Heart left ventricle (tissue), 16 donors: ENCODE measurements at regions of chr12 and their contacts with region 1.

Region 1: GRCh38 chr12:124567661-124568373 is 405 bp upstream of the NCOR2 start:
- DNase-seq: peak; percentile 96 to 98 (median 96)
- ATAC-seq: peak; percentile 79 to 90 (median 86)
- H3K4me3 ChIP-seq: peak overlapping the region in 11 of 12 donors; percentile 24 to 99 (median 47)
- H3K27ac ChIP-seq: peak overlapping the region; percentile 66 to 99 (median 92)
- H3K4me1 ChIP-seq: peaks cover 0 to 53% (median 43%) of the 10 kb centered on the region in 12 donors
- H3K27me3 ChIP-seq: no peaks in the 10 kb centered on the region
- CTCF ChIP-seq: peak in 1 of 12 donors; percentile 16
- POLR2A ChIP-seq: no peak

Region 2: GRCh38 chr12:124036674-124037109 is 531.1 kb before region 1 on chr12:
- intact Hi-C with region 1: loop called in 2 of 10 experiments (anchors 10 kb)
- DNase-seq: peak in 1 of 5 donors; percentile 49
- ATAC-seq: peak in 3 of 4 donors; percentile 35 to 55 (median 51)
- H3K4me3 ChIP-seq: no peak overlapping the region
- H3K27ac ChIP-seq: no peak overlapping the region
- H3K4me1 ChIP-seq: peaks cover 0 to 9% (median 0%) of the 10 kb centered on the region in 12 donors
- H3K27me3 ChIP-seq: no peaks in the 10 kb centered on the region
- CTCF ChIP-seq: peak; percentile 84 to 99 (median 94)
- POLR2A ChIP-seq: no peak

Region 3: DNA sequence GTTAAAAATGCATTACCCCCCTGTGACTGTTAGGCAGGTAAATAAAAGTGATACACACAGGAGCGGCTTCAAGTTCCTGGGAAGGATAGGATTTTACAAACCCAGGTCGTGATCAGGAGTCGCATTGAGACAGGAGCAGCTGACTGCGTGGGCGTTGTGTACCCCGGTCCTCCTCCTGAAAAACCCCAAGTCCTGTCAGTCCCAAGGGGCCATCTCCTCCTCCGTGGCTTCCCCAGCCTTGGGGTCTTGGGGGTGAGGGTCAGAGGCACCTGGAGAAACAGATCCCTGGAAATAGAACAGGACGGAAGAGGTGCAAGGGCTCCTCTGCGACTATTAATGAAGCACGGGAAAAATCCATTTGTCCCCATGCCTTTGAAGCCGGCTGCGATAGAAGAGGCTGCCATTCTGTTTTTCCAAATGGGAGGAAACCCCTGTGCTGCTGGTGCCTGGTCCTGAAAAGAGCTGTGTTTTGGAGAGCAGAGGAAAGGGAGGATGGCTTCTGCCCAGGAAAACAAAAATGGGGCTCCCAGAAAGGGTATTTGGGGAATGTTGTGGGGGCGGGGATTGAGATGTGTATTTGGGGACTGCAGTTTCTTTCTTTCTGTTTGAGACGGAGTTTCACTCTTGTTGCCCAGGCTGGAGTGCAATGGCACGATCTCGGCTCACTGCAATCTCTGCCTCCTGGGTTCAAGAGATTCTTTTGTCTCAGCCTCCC is 451.7 kb before region 1 on chr12:
- intact Hi-C with region 1: no loop called
- DNase-seq: no peak
- ATAC-seq: no peak
- H3K4me3 ChIP-seq: no peak overlapping the region
- H3K27ac ChIP-seq: no peak overlapping the region
- H3K4me1 ChIP-seq: no peaks in the 10 kb centered on the region
- H3K27me3 ChIP-seq: no peaks in the 10 kb centered on the region
- CTCF ChIP-seq: no peak
- POLR2A ChIP-seq: no peak

Region 4: DNA sequence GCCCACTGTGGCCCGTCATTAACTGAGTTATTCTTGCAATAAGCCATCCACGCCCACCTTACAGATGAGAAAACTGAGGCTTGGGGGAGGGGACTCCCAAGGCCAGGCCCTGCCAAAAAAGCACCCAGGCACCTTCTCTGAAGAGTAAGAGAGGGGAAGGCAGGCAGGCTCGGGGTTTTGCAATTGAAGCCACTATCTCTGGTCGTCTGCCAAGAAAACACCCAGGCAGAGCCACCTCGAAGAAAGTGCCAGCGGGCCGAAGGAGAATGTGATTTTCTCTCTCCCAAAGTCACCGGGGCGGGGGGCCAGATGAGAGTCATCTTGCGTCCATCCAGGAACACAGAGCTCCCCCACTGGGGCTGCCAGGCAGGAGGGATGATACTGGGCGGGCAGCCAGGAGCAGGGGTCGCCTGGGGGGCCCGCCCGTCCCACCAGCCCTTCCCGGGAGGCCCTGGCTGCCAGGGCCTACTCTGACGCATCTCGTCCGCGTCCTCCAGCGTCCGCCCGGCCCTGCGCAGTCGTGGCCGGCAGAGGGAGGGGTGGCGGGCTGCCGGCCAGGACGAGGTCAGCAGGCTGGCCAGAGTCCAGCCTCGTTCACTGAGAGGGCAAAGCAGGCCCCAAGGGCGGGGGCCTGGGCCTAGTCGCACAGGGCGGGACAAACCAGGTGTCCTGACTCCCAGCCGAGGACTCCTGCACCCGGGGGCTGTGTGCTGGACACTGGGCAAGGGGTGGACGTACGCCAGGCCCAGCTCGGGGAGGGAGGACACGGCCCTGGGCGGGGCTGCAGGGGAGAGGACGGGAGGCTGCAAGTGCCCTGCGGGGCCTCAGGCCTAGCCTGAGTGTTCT is 198.5 kb before region 1 on chr12:
- intact Hi-C with region 1: loop called in 2 of 10 experiments (anchors 5 kb)
- DNase-seq: peak; percentile 93 to 96 (median 94)
- ATAC-seq: peak; percentile 82 to 90 (median 88)
- H3K4me3 ChIP-seq: peak overlapping the region in 2 of 12 donors; percentile 12 to 16
- H3K27ac ChIP-seq: peak overlapping the region; percentile 74 to 99 (median 94)
- H3K4me1 ChIP-seq: peaks cover 8 to 76% (median 56%) of the 10 kb centered on the region in 12 donors
- H3K27me3 ChIP-seq: no peaks in the 10 kb centered on the region
- CTCF ChIP-seq: peak; percentile 23 to 69 (median 52)
- POLR2A ChIP-seq: peak in 1 of 2 donors; percentile 14

Region 5: DNA sequence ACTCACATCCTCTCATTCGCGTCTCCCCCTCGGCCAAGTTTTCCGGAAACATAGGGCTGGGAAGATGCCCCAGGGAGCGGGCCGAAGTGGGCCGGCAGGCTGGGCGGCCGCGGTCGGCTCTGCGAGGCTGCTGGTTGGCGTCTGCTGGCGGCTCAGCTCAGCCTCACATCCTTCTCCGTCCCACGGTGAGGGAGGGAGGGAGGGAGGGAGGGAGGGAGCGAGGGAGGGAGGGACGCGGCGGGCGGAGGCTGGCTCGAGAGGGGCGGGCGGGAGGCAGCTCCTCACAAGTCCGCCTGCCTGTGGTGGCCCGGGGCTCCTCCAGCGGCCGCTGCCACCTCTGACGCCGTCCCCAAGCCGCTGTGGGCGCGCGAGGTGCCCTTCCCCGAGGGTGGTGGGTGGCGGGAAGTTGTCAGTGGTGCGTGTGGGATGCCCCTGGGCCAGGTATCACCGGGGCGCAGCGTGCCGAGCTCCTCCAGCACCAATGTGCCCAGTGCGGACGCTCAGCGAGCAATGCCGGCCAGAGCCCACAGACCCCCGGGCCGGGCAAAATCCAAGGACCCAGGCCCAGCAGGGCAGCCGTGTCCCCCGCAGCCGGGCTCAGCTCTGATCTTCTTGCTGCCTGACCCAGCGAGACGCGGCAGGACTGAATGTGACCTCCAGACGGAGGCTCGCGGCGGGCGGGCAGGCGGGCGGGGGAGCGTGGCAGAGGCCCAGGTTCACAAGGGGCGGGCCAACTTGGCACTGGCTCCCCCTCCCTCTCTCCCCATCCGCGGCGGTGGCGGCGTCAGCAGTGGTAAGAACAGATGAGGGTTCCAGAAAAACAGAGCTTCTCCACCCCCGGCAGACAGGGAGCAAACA is 178.9 kb before region 1 on chr12:
- intact Hi-C with region 1: loop called in 3 of 10 experiments (anchors 5 to 10 kb)
- DNase-seq: peak; percentile 89 to 93 (median 93)
- ATAC-seq: peak; percentile 21 to 67 (median 59)
- H3K4me3 ChIP-seq: peak overlapping the region; percentile 33 to 81 (median 64)
- H3K27ac ChIP-seq: peak overlapping the region; percentile 73 to 99 (median 96)
- H3K4me1 ChIP-seq: peaks cover 23 to 98% (median 90%) of the 10 kb centered on the region in 12 donors
- H3K27me3 ChIP-seq: no peaks in the 10 kb centered on the region
- CTCF ChIP-seq: peak in 3 of 12 donors; percentile 9 to 34 (median 22)
- POLR2A ChIP-seq: peak in 1 of 2 donors; percentile 52

Region 6: GRCh38 chr12:124422129-124422569 is 145.7 kb before region 1 on chr12:
- intact Hi-C with region 1: no loop called
- DNase-seq: no peak
- ATAC-seq: peak in 3 of 4 donors; percentile 2 to 11 (median 4)
- H3K4me3 ChIP-seq: peak overlapping the region in 7 of 12 donors; percentile 3 to 27 (median 12)
- H3K27ac ChIP-seq: peak overlapping the region; percentile 82 to 94 (median 90)
- H3K4me1 ChIP-seq: peaks cover 6 to 73% (median 45%) of the 10 kb centered on the region in 12 donors
- H3K27me3 ChIP-seq: no peaks in the 10 kb centered on the region
- CTCF ChIP-seq: no peak
- POLR2A ChIP-seq: no peak

Region 7: GRCh38 chr12:124490584-124491308 is 77.1 kb before region 1 on chr12:
- intact Hi-C with region 1: no loop called
- DNase-seq: peak; percentile 87 to 96 (median 90)
- ATAC-seq: peak; percentile 87 to 93 (median 92)
- H3K4me3 ChIP-seq: no peak overlapping the region
- H3K27ac ChIP-seq: peak overlapping the region in 9 of 12 donors; percentile 0 to 70 (median 44)
- H3K4me1 ChIP-seq: peaks cover 10 to 85% (median 64%) of the 10 kb centered on the region in 12 donors
- H3K27me3 ChIP-seq: no peaks in the 10 kb centered on the region
- CTCF ChIP-seq: no peak
- POLR2A ChIP-seq: no peak

Region 8: DNA sequence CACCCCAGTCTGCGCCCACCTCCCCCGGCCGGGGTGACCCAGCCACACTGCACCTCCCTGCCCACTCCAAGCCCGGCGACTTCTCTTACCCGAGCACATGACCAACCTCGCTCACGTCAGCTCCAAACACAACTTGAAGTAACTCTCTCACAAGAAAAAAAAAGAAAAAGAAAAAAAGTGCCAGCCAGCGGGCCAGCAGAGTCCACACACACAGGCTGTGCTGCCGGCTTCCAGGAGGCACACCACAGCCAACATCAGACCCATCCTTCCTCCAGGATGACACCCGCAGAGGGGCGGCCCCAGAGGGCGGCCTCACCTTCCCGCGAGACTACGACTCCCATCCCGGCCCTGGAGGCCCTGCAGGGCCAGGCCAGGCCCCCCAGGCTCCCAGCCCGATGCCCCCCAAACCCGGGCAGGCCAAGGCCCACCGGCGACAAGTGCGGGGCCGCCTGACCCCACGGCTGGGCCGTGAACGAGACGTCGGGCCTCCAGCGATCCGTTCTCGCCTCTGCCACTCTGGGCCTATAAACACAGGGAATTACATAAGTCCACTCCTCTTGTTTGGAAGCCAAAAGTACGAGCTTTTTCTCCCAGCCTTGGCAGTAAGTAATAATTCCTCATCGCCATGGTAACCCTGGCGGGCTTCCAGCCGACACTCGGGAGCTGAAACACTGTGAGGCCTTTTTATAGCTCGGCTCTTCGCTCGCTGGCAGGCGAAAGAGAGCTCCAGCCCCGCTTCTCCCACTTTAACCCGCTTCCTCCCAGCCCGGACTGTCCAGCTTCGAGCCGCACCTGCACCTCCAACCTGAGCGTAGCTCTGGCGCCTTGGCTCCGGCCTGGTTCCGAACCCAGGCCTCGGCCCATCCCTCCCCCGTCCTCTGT is 49.5 kb before region 1 on chr12:
- intact Hi-C with region 1: loop called in 8 of 10 experiments (anchors 1 to 5 kb)
- DNase-seq: peak; percentile 97 to 99 (median 98)
- ATAC-seq: peak; percentile 69 to 79 (median 72)
- H3K4me3 ChIP-seq: peak overlapping the region; percentile 35 to 81 (median 58)
- H3K27ac ChIP-seq: peak overlapping the region; percentile 90 to 100 (median 95)
- H3K4me1 ChIP-seq: peaks cover 15 to 98% (median 85%) of the 10 kb centered on the region in 12 donors
- H3K27me3 ChIP-seq: no peaks in the 10 kb centered on the region
- CTCF ChIP-seq: no peak
- POLR2A ChIP-seq: peak in 1 of 2 donors; percentile 32

Region 9: DNA sequence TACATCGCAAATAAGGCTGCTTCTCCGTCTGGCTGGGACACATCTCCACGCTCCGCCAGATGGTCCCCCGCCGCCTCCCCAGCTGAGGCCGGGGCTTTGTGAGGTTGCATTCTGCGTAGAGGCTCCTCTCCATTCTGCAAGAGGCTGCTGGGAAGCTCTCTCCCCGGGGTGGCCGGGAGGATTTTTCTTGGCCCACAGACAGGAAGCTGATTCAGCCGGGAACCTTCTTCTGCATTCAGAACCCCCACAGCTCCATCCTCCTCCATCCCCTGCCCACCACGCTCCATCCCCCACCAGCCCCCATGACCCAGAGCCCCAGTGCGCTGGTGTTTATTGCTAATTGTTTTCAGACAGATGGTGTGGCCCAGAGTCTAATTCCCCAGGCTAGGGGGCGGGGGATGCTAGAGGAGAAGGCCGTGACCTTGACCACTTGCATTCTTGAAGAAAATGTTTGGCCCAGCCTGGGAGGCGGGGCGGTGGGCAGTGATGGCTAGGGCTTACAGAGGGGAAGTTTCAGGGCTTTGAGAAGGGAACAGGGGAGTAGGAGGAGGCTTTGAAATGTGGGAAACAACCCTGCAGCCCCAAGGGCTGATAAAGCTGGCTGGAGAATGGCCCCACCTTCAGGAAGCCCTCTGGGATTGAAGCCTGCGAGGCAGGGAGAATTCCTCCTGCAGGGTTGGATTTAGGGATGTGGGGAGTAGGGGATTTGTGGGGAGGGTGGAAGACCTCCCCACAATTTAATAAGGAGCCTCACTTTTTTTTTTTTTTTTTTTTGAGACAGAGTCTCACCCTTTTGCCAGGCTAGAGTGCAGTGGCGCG is 88.1 kb after region 1 on chr12:
- intact Hi-C with region 1: loop called in 1 of 10 experiments (anchors 2 kb)
- DNase-seq: peak; percentile 87 to 91 (median 90)
- ATAC-seq: peak; percentile 70 to 81 (median 79)
- H3K4me3 ChIP-seq: peak overlapping the region in 8 of 12 donors; percentile 1 to 42 (median 24)
- H3K27ac ChIP-seq: peak overlapping the region; percentile 43 to 92 (median 84)
- H3K4me1 ChIP-seq: peaks cover 3 to 64% (median 44%) of the 10 kb centered on the region in 12 donors
- H3K27me3 ChIP-seq: no peaks in the 10 kb centered on the region
- CTCF ChIP-seq: no peak
- POLR2A ChIP-seq: no peak

Region 10: DNA sequence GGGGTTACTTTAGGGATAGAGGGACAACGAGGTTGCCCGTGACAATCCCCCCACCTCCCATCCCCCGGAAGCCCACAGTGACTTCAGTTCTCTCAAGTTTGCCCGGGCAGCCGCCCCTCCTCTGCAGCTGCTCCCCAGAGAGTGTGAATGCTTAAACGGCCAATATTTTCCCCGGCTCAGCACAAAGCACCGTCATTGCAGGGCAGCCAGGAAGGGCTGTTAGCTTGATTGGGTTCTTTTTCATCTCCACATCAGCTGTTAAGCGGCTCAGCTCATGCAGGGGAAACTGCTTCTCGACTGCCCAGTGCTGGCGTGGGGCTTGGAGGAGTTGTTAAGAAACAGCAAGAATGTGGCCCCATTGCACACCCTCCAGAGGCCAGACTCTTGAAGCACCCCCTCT is 120.1 kb after region 1 on chr12:
- intact Hi-C with region 1: loop called in 7 of 10 experiments (anchors 2 to 10 kb)
- DNase-seq: peak in 4 of 5 donors; percentile 56 to 76 (median 61)
- ATAC-seq: peak in 3 of 4 donors; percentile 11 to 56 (median 51)
- H3K4me3 ChIP-seq: no peak overlapping the region
- H3K27ac ChIP-seq: peak overlapping the region; percentile 2 to 84 (median 68)
- H3K4me1 ChIP-seq: peaks cover 10 to 63% (median 43%) of the 10 kb centered on the region in 12 donors
- H3K27me3 ChIP-seq: no peaks in the 10 kb centered on the region
- CTCF ChIP-seq: no peak
- POLR2A ChIP-seq: no peak

Region 11: GRCh38 chr12:125015680-125016310 is 448.0 kb after region 1 on chr12:
- intact Hi-C with region 1: no loop called
- DNase-seq: no peak
- ATAC-seq: no peak
- H3K4me3 ChIP-seq: no peak overlapping the region
- H3K27ac ChIP-seq: no peak overlapping the region
- H3K4me1 ChIP-seq: no peaks in the 10 kb centered on the region
- H3K27me3 ChIP-seq: no peaks in the 10 kb centered on the region
- CTCF ChIP-seq: no peak
- POLR2A ChIP-seq: no peak